ENCODE measurements at regions of chr13 and their contacts with region 1.

Region 1: GRCh38 chr13:23871616-23872220 is 17.5 kb downstream of the MIPEP start:
- DNase-seq: no peak
- H3K4me3 Mint-ChIP-seq: no peak overlapping the region
- H3K27ac Mint-ChIP-seq: no peak overlapping the region
- H3K4me1 Mint-ChIP-seq: no peaks in the 10 kb centered on the region
- H3K27me3 Mint-ChIP-seq: no peaks in the 10 kb centered on the region

Region 2: GRCh38 chr13:23512761-23513395 is 358.8 kb before region 1 on chr13:
- CTCF ChIA-PET with region 1: no interaction called
- intact Hi-C with region 1: loop called (anchors 2 kb)
- DNase-seq: no peak
- H3K4me3 Mint-ChIP-seq: no peak overlapping the region
- H3K27ac Mint-ChIP-seq: no peak overlapping the region
- H3K4me1 Mint-ChIP-seq: no peaks in the 10 kb centered on the region
- H3K27me3 Mint-ChIP-seq: peaks cover 33% of the 10 kb centered on the region

Region 3: DNA sequence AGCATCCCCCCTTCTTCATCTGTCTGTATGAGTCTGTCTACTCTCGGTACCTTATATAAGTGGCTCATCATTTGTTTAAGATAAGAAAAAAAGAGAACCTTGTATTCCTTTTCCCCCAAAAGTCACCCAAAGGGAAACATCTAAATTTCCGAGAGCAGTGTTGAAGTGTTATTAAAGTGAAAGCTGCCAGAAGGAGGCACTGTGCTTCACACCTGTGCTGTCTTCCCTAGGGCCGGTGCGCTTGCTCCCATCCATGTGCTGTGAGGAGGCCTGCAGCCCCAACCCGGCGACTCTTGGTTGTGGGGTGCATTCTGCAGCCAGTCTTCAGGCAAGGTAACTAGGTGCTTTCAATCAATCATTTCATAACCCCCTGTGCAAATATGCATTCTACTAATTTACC is 204.0 kb before region 1 on chr13:
- CTCF ChIA-PET with region 1: no interaction called
- intact Hi-C with region 1: loop called (anchors 2 kb)
- DNase-seq: no peak
- H3K4me3 Mint-ChIP-seq: no peak overlapping the region
- H3K27ac Mint-ChIP-seq: no peak overlapping the region
- H3K4me1 Mint-ChIP-seq: no peaks in the 10 kb centered on the region
- H3K27me3 Mint-ChIP-seq: peaks cover 6% of the 10 kb centered on the region

Region 4: DNA sequence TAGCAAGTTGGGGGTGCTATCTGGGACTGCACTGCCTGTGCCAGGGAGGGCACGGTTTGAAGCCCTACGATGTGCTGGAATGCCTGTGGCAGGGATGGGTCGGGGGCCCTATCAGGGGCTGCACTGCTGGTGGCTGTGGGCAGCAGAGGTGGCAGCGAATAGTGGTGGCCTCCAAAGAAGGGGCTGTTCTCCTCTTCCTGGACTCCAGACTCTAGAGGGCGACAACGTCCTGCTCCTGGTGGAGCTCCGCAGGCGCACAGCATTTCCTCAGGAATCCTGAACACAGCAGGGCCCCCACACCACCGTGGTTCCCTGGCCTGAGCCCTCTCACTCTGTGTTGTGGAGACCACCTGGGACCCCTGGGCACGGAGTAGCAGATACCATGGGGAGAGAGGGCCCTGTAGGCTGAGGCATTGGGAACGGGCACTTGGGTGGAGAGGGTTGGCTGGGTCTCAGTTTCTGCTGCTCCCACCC is 155.9 kb before region 1 on chr13:
- CTCF ChIA-PET with region 1: no interaction called
- intact Hi-C with region 1: loop called (anchors 1 kb)
- DNase-seq: peak; percentile 16
- H3K4me3 Mint-ChIP-seq: no peak overlapping the region
- H3K27ac Mint-ChIP-seq: no peak overlapping the region
- H3K4me1 Mint-ChIP-seq: peaks cover 17% of the 10 kb centered on the region
- H3K27me3 Mint-ChIP-seq: no peaks in the 10 kb centered on the region

Region 5: DNA sequence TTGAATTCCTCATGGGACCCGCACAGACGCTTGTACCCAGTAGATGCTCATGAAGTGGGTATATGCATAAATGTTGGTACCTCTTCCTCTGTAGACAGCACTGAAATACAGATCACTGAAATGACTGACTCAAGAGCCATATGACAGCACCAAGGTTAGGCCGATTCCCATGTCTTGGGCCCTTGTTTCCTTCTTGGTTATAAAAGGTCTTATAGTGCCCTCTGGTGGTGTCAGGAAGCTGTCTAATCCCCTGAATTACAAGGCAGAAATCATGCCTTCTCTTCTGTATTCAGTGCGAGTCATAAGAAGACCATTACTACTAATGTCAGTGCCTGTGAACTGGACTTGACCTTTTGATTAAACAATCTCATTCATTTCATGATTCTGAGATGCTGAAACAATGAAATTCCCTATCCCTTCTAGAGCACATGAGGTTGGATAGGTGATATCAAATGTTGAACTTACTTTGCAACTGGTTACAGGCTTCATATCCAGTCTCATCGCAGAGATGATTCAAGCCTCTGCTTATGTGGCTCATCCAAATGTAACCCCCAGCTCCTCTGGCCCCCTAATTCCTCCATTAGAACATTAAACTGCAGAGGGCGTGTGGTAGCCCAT is 348.5 kb after region 1 on chr13:
- CTCF ChIA-PET with region 1: interaction called, 3 read pairs
- intact Hi-C with region 1: loop called (anchors 1 kb)
- DNase-seq: peak; percentile 72
- H3K4me3 Mint-ChIP-seq: no peak overlapping the region
- H3K27ac Mint-ChIP-seq: no peak overlapping the region
- H3K4me1 Mint-ChIP-seq: peaks cover 22% of the 10 kb centered on the region
- H3K27me3 Mint-ChIP-seq: no peaks in the 10 kb centered on the region